ENCODE measurements at regions of chr7 and their contacts with region 1.

Region 1: GRCh38 chr7:21953781-21954180 is 8.1 kb upstream of the CDCA7L start:
- DNase-seq: no peak
- H3K4me3 ChIP-seq: no peak overlapping the region
- H3K27ac ChIP-seq: no peak overlapping the region
- H3K4me1 ChIP-seq: peaks cover 12% of the 10 kb centered on the region
- CTCF ChIP-seq: no peak

Region 2: GRCh38 chr7:21966271-21966670 is 12.5 kb after region 1 on chr7:
- CTCF ChIA-PET with region 1: no interaction called
- POLR2A ChIA-PET with region 1: interaction called, 194 read pairs
- intact Hi-C with region 1: no loop called
- DNase-seq: peak; percentile 88
- H3K4me3 ChIP-seq: peak overlapping the region; percentile 59
- H3K27ac ChIP-seq: peak overlapping the region; percentile 91
- H3K4me1 ChIP-seq: peaks cover 66% of the 10 kb centered on the region
- CTCF ChIP-seq: no peak

Measured in OCI-LY7 (cell line).